Common myeloid progenitor, CD34-positive (primary cell): ENCODE measurements at regions of chr16 and their contacts with region 1.

Region 1: DNA sequence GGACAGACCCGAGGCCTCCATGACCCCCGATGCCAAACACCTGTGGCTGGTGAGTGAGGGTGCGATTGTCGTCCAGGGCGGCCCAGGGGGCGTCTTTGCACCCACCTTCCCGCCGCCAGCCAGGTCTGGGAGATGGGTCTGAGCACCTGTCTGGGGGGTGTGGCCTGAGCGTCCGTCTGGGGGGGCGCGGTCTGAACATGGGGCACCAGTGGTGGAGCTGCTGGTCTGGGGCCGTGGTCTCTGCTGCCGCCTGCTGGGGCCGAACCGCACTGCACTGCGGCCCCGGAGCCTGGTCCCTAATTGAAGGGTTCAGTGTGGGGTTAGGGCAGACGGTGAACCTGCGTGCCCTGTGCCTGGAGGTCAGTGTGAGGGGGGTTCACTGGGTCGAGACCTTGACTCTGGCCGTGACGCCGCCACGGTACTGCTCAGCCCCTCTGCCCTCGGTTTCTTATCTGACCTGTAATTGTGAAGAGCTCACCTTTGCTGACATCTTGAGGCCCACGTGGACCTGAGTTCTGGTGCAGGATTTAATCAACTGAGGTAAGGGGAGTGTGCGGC is 12.6 kb upstream of the TCF25 start:
- DNase-seq: peak; percentile 45 to 62 (median 58)
- H3K4me3 ChIP-seq: no peak overlapping the region
- H3K27ac ChIP-seq: no peak overlapping the region
- H3K4me1 ChIP-seq: peaks cover 0 to 20% (median 16%) of the 10 kb centered on the region in 4 experiments
- H3K27me3 ChIP-seq: no peaks in the 10 kb centered on the region

Region 2: GRCh38 chr16:89749647-89750046 is 111.2 kb before region 1 on chr16:
- CTCF ChIA-PET with region 1: interaction called, 11 read pairs
- POLR2A ChIA-PET with region 1: no interaction called
- DNase-seq: peak; percentile 42 to 60 (median 59)
- H3K4me3 ChIP-seq: no peak overlapping the region
- H3K27ac ChIP-seq: no peak overlapping the region
- H3K4me1 ChIP-seq: peaks cover 0 to 7% (median 3%) of the 10 kb centered on the region in 4 experiments
- H3K27me3 ChIP-seq: no peaks in the 10 kb centered on the region

Region 3: GRCh38 chr16:89795676-89796075 is 65.2 kb before region 1 on chr16:
- CTCF ChIA-PET with region 1: interaction called, 27 read pairs
- POLR2A ChIA-PET with region 1: no interaction called
- DNase-seq: no peak
- H3K4me3 ChIP-seq: no peak overlapping the region
- H3K27ac ChIP-seq: no peak overlapping the region
- H3K4me1 ChIP-seq: no peaks in the 10 kb centered on the region
- H3K27me3 ChIP-seq: no peaks in the 10 kb centered on the region

Region 4: DNA sequence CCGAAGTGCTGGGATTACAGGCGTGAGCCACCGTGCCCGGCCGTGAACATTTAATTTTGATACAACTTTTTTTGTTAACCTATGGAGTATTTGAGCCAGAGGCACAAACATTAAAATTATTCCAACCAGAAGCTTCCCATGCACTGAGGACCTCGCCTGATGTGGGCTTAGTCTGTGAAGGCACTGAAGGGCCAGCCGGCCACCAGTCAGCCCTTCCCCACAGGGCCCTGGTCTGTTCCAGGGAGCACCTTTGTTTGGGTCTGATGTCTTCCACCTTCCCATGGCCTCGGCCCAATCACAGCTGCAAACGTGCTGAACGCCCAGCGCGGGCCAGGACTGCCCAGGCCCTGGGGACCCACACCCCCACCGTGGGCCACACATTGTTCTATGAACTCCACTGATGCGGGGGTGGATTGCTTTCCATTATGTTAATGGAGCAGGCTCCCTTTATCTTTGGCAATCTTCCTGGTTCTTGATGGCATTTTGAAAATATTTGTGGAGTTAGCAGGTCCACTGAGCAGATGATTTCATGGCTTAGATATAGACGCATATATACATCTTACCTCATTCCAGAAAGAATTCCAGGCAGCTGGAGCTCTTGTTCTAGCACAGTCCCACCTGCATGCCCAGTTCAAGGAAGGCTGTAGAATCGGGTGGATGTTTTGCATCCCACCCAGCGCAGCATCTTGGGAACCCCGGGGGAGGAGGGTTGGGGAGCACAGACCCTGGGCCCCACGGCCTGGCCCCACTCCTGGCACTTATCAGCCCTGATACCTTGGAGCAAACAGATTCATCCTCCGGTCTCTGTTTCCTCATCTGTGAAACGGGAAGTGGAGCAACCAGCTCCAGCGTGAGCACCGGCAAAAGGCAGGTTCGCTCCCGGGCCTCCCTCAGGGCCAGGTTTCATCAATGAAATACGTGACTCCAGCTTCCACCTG is 18.1 kb before region 1 on chr16:
- CTCF ChIA-PET with region 1: interaction called, 21 read pairs
- POLR2A ChIA-PET with region 1: no interaction called
- DNase-seq: no peak
- H3K4me3 ChIP-seq: no peak overlapping the region
- H3K27ac ChIP-seq: no peak overlapping the region
- H3K4me1 ChIP-seq: peaks cover 0 to 13% (median 11%) of the 10 kb centered on the region in 4 experiments
- H3K27me3 ChIP-seq: no peaks in the 10 kb centered on the region

Region 5: GRCh38 chr16:89873972-89874689 is 13.3 kb after region 1 on chr16:
- CTCF ChIA-PET with region 1: interaction called, 26 read pairs
- POLR2A ChIA-PET with region 1: interaction called, 7 read pairs
- DNase-seq: peak; percentile 94 to 97 (median 96)
- H3K4me3 ChIP-seq: peak overlapping the region in 6 of 7 experiments; percentile 46 to 89 (median 82)
- H3K27ac ChIP-seq: peak overlapping the region; percentile 54 to 95
- H3K4me1 ChIP-seq: peaks cover 0 to 19% (median 18%) of the 10 kb centered on the region in 4 experiments
- H3K27me3 ChIP-seq: no peaks in the 10 kb centered on the region